ENCODE measurements at regions of chr3 and their contacts with region 1.

Region 1: DNA sequence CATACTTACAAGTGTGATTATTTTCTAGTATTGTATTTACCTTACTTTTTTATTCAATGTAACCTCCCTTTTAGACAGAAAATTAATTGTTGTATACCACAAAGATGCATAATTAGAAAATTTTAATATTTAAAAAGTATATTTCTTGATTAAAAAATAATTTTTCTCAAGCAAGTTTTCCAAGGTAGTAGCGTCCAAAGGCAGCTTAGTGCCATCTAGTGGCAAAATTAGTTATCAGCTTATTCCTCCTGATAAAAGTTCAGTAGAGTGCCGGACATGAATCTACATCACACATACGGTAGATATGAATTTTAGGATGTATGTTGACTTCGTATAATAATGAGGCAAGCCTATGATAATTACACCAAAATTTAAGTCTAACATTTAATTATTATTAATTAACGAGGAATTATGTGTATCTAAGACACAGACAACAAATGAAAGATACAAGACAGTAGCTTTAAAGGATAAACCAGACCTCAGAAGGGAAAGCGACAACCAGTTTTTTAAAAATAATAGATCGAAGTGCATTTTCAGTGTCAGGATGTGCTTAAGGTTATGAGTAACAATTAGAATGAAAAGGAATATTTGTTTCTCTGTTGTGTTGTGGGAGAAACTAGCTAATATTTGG is 405.9 kb downstream of the ROBO1 start:
- DNase-seq: peak; percentile 48
- H3K4me3 ChIP-seq: no peak overlapping the region
- H3K27ac ChIP-seq: no peak overlapping the region
- H3K4me1 ChIP-seq: peaks cover 4% of the 10 kb centered on the region
- H3K27me3 ChIP-seq: no peaks in the 10 kb centered on the region
- CTCF ChIP-seq: peak; percentile 55 to 57
- POLR2A ChIP-seq: no peak

Region 2: DNA sequence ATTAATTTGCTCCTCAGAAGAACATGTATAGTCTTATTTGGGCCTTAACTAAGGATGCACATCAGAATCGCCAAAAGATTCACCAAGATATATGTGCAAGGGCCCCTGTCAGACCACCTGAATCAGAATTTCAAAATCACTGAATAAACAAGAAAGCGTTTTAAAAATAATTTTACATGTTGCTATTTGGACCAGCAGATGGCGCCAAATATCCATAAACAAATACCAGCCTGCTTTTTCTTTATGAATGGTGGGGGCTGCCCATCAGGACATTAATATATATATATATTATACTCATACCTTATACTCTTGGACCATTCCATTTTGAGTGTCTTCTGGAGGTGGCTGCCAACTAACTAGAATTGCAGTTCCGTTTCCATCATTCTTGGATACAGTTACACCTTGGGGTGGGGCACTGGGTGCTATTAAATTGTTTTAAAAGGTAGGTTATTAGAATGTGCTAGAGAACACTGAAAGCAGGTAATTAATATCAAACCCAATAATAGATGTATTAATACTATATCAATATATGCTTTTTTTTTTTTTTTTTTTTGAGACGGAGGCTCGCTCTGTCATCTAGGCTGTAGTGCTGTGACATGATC is 702.4 kb before region 1 on chr3:
- CTCF ChIA-PET with region 1: interaction called, 22 read pairs
- POLR2A ChIA-PET with region 1: no interaction called
- dilution Hi-C with region 1: no loop called
- intact Hi-C with region 1: loop called (anchors 1 kb)
- DNase-seq: peak; percentile 52
- H3K4me3 ChIP-seq: no peak overlapping the region
- H3K27ac ChIP-seq: no peak overlapping the region
- H3K4me1 ChIP-seq: no peaks in the 10 kb centered on the region
- H3K27me3 ChIP-seq: no peaks in the 10 kb centered on the region
- CTCF ChIP-seq: peak; percentile 20 to 29
- POLR2A ChIP-seq: no peak

Region 3: GRCh38 chr3:79081335-79081734 is 280.5 kb before region 1 on chr3:
- CTCF ChIA-PET with region 1: interaction called, 301 read pairs
- POLR2A ChIA-PET with region 1: interaction called, 3 read pairs
- dilution Hi-C with region 1: no loop called
- intact Hi-C with region 1: loop called (anchors 1 kb)
- DNase-seq: no peak
- H3K4me3 ChIP-seq: no peak overlapping the region
- H3K27ac ChIP-seq: no peak overlapping the region
- H3K4me1 ChIP-seq: no peaks in the 10 kb centered on the region
- H3K27me3 ChIP-seq: no peaks in the 10 kb centered on the region
- CTCF ChIP-seq: no peak
- POLR2A ChIP-seq: no peak

Region 4: DNA sequence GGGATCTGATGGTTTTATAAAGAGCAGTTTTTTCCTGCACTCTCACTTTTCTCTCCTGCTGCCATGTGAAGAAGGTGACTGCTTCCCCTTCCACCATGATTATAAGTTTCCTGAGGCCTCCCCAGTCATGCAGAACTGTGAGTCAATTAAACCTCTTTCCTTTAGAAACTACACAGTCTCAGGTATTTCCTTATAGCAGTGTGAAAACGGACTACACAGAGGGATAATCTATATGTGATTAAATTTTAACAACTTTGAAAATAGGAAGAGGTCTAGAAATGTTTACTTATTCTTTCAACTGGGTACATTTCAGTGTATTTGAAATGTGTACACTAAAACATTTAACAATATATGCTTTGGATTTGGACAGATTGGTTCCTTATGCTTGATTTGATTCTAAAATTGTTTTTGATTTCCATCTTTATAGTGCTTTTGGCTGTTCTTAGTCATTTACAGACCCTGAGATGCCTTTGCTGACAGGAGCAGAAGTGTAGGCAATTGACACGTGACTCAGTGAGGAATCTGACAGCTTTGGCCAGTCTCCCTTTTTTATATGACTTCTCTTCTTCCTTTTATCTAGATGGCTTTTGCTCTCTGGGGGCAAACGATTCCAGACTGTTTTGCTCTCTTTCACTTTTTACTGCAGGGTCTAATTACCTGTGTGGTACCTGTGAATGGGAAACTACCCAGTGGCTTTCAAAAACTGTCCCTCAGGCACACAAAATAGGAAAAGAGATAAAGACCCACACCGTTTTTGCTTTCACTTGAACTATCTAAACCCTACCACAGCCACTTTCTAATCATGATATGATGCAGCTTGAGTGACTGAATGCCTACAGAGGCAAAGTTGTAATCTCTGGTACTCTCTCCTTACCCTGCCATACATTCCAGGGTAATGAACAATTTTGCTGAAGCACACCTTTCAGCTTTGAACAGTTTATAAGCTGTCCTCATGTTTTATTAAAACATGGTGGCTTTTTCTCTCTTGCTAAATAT is 16.7 kb before region 1 on chr3:
- CTCF ChIA-PET with region 1: interaction called, 31 read pairs
- POLR2A ChIA-PET with region 1: no interaction called
- dilution Hi-C with region 1: no loop called
- intact Hi-C with region 1: no loop called
- DNase-seq: no peak
- H3K4me3 ChIP-seq: no peak overlapping the region
- H3K27ac ChIP-seq: no peak overlapping the region
- H3K4me1 ChIP-seq: no peaks in the 10 kb centered on the region
- H3K27me3 ChIP-seq: no peaks in the 10 kb centered on the region
- CTCF ChIP-seq: no peak
- POLR2A ChIP-seq: no peak

Region 5: DNA sequence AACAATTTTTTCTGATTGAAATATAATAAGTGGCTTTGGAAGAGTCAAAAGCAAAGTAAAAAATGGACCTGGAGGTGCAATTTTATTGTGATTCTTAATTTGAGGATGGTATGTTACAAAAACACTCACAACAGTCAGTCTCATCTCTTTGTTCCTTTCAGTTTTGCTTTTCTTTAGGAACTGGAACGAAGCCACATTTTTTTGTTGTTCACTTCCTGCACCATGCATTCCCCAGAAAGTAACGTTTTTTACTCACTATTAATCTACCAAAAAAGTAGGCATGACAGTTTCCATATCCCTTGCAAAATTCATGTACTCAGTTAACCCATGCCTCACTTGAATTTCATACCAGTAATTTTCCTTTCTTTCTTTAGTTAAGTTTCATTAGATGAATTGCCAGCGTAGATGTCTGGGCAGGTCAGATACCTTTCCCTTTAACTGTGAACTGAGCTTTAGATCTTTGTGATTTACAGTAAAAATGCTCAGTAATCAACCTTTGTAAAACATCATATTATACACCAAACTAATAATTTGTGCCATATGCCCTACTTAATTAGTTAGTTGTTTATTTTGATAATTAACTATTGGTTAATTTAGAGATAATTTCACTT is 21.6 kb after region 1 on chr3:
- CTCF ChIA-PET with region 1: interaction called, 12 read pairs
- POLR2A ChIA-PET with region 1: no interaction called
- dilution Hi-C with region 1: no loop called
- intact Hi-C with region 1: no loop called
- DNase-seq: peak; percentile 32
- H3K4me3 ChIP-seq: peak overlapping the region in 1 of 3 experiments; percentile 46
- H3K27ac ChIP-seq: no peak overlapping the region
- H3K4me1 ChIP-seq: no peaks in the 10 kb centered on the region
- H3K27me3 ChIP-seq: no peaks in the 10 kb centered on the region
- CTCF ChIP-seq: no peak
- POLR2A ChIP-seq: no peak

Region 6: DNA sequence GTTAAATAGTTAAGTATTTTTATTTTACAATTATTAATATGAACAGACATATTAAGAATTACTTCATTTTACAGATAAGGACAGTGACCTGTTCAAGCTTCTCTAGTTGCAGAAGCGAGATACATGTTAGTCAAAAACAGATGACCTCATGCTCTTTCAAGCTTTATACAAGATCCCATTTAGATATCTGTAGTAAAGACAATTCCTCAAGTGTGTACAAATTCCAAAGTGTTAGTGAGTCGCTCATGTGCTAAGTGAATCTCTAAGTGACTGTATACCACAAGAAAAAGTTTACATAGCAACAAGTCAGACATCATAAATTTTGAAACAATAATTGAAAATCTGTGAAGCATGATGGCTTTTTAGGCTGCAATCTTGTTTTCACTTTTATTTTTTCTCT is 112.1 kb after region 1 on chr3:
- CTCF ChIA-PET with region 1: no interaction called
- POLR2A ChIA-PET with region 1: no interaction called
- dilution Hi-C with region 1: no loop called
- intact Hi-C with region 1: no loop called
- DNase-seq: no peak
- H3K4me3 ChIP-seq: no peak overlapping the region
- H3K27ac ChIP-seq: no peak overlapping the region
- H3K4me1 ChIP-seq: no peaks in the 10 kb centered on the region
- H3K27me3 ChIP-seq: no peaks in the 10 kb centered on the region
- CTCF ChIP-seq: no peak
- POLR2A ChIP-seq: no peak

Region 7: GRCh38 chr3:79639855-79640254 is 278.0 kb after region 1 on chr3:
- CTCF ChIA-PET with region 1: no interaction called
- POLR2A ChIA-PET with region 1: no interaction called
- dilution Hi-C with region 1: no loop called
- intact Hi-C with region 1: no loop called
- DNase-seq: no peak
- H3K4me3 ChIP-seq: no peak overlapping the region
- H3K27ac ChIP-seq: no peak overlapping the region
- H3K4me1 ChIP-seq: no peaks in the 10 kb centered on the region
- H3K27me3 ChIP-seq: no peaks in the 10 kb centered on the region
- CTCF ChIP-seq: no peak
- POLR2A ChIP-seq: no peak

Measured in endothelial cell of umbilical vein (primary cell).